ENCODE measurements at regions of chr20 and their contacts with region 1.

Region 1: GRCh38 chr20:38073307-38074071 is 39.9 kb downstream of the RPRD1B start:
- DNase-seq: peak; percentile 80
- H3K27ac ChIP-seq: no peak overlapping the region; the same call in 1 of the 2 replicates
- CTCF ChIP-seq: peak; percentile 89

Region 2: DNA sequence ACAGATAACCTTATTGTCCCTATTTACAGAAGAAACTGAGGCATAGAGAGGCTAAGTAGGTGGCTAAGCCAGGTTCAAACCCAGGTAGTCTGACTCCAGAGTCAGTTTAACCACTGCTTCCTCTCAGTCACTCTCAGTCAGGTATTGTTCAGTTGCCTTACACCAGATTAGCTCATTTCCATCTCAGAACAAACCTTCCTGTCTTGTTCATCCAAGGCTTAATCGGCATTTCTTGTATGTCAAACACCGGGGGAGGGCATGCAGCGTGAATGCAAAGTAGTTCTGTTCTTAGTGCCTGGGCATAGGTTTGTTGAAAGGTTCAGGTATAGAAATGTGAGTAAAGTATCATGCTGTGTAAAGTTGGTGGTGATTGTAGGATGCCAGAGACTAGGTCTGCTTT is 327.9 kb before region 1 on chr20:
- CTCF ChIA-PET with region 1: no interaction called
- POLR2A ChIA-PET with region 1: no interaction called
- DNase-seq: no peak
- H3K27ac ChIP-seq: no peak overlapping the region
- CTCF ChIP-seq: no peak

Region 3: GRCh38 chr20:38057351-38057972 is 16.0 kb before region 1 on chr20:
- CTCF ChIA-PET with region 1: interaction called, 24 read pairs
- POLR2A ChIA-PET with region 1: no interaction called
- DNase-seq: peak; percentile 92
- H3K27ac ChIP-seq: no peak overlapping the region
- CTCF ChIP-seq: peak; percentile 97

Region 4: DNA sequence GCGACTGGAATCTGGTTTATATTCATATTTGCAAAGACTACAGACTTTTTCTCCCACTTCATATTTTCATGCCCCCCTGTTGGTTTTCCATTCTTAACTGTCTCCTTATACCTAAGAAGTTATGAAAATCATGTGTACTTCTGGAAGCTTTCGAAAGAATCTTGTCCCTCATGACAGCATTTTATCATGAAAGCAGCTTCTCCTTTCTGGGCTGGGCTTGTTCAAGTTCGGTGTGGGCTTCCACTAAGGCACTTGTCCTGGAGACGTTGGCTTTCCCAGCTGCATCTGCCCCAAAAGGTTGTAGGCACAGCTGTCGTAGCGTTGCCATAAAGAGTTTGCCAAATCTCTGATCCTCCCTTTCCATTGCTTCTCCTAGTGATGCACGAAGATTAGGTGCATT is 16.6 kb after region 1 on chr20:
- CTCF ChIA-PET with region 1: interaction called, 11 read pairs
- POLR2A ChIA-PET with region 1: no interaction called
- DNase-seq: no peak
- H3K27ac ChIP-seq: no peak overlapping the region
- CTCF ChIP-seq: no peak

Measured in RWPE1 (cell line).